ENCODE measurements at regions of chr5 and their contacts with region 1.

Region 1: GRCh38 chr5:139262742-139263445 is 30.6 kb upstream of the MATR3 start:
- DNase-seq: peak; percentile 85 to 89
- ATAC-seq: peak; percentile 95 to 99 (median 99)
- H3K4me3 ChIP-seq: no peak overlapping the region
- H3K27ac ChIP-seq: peak overlapping the region in 7 of 10 donors; percentile 7 to 74 (median 63)
- H3K4me1 ChIP-seq: peaks cover 3 to 23% (median 14%) of the 10 kb centered on the region in 9 donors
- H3K27me3 ChIP-seq: no peaks in the 10 kb centered on the region
- CTCF ChIP-seq: peak; percentile 76 to 97 (median 92)

Region 2: DNA sequence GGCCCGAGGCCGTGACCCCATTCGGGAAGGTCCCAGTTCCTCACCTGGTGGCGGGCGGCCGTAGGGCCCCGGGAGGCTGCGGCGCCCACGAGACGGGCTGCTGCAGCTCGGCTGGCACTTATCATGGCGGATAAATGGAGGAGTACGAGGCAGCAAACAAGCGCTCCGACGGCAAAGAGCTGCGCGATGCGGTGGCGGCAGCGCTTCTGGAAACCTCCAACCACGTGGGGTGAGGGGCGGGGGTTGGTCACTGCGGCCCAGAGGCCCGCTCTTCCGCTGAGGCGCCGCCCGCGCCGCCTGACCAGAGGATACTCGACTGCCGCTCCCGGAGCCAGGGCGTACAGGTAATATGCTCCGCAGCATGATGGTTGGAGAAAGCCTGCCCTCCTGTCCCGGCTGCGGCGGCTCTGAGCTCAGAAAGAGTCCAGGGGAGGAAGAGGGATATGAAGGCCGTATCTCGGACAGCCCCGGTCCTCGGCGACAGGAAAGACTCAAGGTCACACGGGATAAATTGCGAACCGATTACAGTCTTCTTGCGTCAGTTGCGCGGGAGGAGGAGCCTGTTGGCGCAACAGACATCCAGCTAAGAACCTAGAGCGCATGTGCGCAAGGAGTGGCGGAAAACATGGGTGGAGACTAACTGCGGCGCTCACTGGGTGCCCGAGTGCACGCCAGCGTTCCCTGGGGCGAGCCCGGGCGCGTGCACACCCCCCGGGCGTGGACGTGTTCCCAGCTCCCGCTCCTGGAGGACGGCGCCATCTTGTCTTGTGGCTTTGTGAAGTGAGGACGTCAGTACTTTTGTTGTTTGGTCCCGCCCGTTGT is 687.5 kb before region 1 on chr5 and contains the start of gene HSPA9:
- intact Hi-C with region 1: loop called in 7 of 10 experiments (anchors 2 to 10 kb)
- DNase-seq: peak; percentile 96 to 99
- ATAC-seq: peak; percentile 96 to 98 (median 97)
- H3K4me3 ChIP-seq: peak within 1 kb of the TSS; percentile 69 to 98 (median 86)
- H3K27ac ChIP-seq: peak within 1 kb of the TSS; percentile 93 to 99 (median 98)
- H3K4me1 ChIP-seq: peaks cover 0 to 38% (median 20%) of the 10 kb centered on the region in 9 donors
- H3K27me3 ChIP-seq: no peaks in the 10 kb centered on the region
- CTCF ChIP-seq: peak in 2 of 9 donors; percentile 9 to 17
- total RNA-seq, gene HSPA9: 246 to 415 (median 324) TPM

Region 3: GRCh38 chr5:138594305-138595058 is 668.4 kb before region 1 on chr5:
- intact Hi-C with region 1: loop called in 2 of 10 experiments (anchors 5 to 10 kb)
- DNase-seq: no peak
- ATAC-seq: no peak
- H3K4me3 ChIP-seq: no peak overlapping the region
- H3K27ac ChIP-seq: no peak overlapping the region
- H3K4me1 ChIP-seq: no peaks in the 10 kb centered on the region
- H3K27me3 ChIP-seq: no peaks in the 10 kb centered on the region
- CTCF ChIP-seq: peak in 6 of 9 donors; percentile 13 to 43 (median 26)

Region 4: GRCh38 chr5:138752951-138753793 is 509.7 kb before region 1 on chr5 and contains the start of gene CTNNA1:
- intact Hi-C with region 1: loop called in 3 of 10 experiments (anchors 5 to 10 kb)
- DNase-seq: peak; percentile 83 to 88
- ATAC-seq: peak; percentile 80 to 89 (median 82)
- H3K4me3 ChIP-seq: peak within 1 kb of the TSS; percentile 44 to 100 (median 98)
- H3K27ac ChIP-seq: peak within 1 kb of the TSS; percentile 96 to 100 (median 100)
- H3K4me1 ChIP-seq: peaks cover 10 to 47% (median 39%) of the 10 kb centered on the region in 9 donors
- H3K27me3 ChIP-seq: no peaks in the 10 kb centered on the region
- CTCF ChIP-seq: no peak
- total RNA-seq, gene CTNNA1: 337 to 416 (median 382) TPM

Region 5: GRCh38 chr5:138874771-138875551 is 387.9 kb before region 1 on chr5 and contains the start of gene LRRTM2:
- intact Hi-C with region 1: loop called in 1 of 10 experiments (anchors 5 kb)
- DNase-seq: no peak
- ATAC-seq: no peak
- H3K4me3 ChIP-seq: peak within 1 kb of the TSS in 2 of 10 donors; percentile 12
- H3K27ac ChIP-seq: no peak within 1 kb of the TSS
- H3K4me1 ChIP-seq: peaks cover 7 to 82% (median 56%) of the 10 kb centered on the region in 9 donors
- H3K27me3 ChIP-seq: no peaks in the 10 kb centered on the region
- CTCF ChIP-seq: no peak
- total RNA-seq, gene LRRTM2: 0.07 to 0.49 (median 0.17) TPM in 4 of 10 donors, not detected in the others

Region 6: DNA sequence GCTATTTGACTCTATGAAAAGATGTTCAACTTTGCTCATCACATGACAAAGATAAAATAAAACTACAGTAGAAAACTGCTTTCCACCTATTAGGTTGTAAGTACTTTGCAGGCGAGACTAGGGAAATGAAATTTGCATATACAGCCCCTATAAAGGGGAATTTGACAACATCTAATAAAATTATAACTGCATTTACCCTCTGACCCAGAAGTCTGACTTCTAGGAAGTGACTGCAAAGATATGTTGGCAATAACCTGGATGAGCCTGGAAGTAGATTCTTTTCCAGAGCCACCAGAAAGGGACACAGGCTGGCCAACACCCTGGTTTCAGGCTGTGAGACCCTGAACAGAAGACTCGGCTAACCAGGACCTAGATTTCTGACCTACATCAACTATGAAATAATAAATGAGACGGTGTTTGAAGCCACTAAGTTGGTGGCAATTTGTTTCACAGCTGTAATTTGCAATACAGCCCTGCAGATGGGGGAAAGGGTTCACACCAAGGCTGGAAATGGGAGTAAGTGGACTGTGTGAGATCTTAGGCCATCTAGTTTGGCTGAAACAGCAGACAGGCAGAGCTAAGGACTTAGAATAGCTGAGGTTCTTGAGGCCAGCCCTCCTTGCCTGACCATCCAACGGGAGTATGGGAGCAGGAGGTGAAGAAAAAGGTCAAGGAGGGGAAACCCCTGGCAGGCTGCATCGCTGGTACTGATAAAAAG is 171.3 kb before region 1 on chr5:
- intact Hi-C with region 1: loop called (anchors 2 to 10 kb)
- DNase-seq: peak in 1 of 2 donors; percentile 42
- ATAC-seq: peak; percentile 76 to 92 (median 90)
- H3K4me3 ChIP-seq: no peak overlapping the region
- H3K27ac ChIP-seq: peak overlapping the region in 1 of 10 donors; percentile 46
- H3K4me1 ChIP-seq: peaks cover 0 to 19% (median 9%) of the 10 kb centered on the region in 9 donors
- H3K27me3 ChIP-seq: no peaks in the 10 kb centered on the region
- CTCF ChIP-seq: peak in 7 of 9 donors; percentile 33 to 66 (median 54)

Region 7: GRCh38 chr5:139181835-139182452 is 81.0 kb before region 1 on chr5:
- intact Hi-C with region 1: no loop called
- DNase-seq: no peak
- ATAC-seq: no peak
- H3K4me3 ChIP-seq: no peak overlapping the region
- H3K27ac ChIP-seq: peak overlapping the region in 2 of 10 donors; percentile 5 to 26
- H3K4me1 ChIP-seq: peaks cover 7 to 79% (median 61%) of the 10 kb centered on the region in 9 donors
- H3K27me3 ChIP-seq: no peaks in the 10 kb centered on the region
- CTCF ChIP-seq: no peak

Region 8: DNA sequence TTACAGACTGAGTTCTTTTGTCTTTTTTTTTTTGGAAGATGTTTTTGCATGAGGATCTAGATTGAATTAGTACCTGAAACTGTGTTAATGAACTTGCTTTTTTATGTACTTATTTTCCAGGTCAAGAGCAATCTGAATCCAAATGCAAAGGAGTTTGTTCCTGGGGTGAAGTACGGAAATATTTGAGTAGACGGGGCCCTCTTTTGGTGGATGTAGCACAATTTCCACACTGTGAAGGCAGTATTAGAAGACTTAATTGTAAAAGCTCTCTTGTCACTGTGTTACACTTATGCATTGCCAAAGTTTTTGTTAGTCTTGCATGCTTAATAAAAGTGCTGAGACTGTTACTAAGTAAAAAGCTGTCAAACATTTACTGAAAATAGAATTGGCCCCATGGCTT is 105.7 kb after region 1 on chr5:
- intact Hi-C with region 1: no loop called
- DNase-seq: no peak
- ATAC-seq: peak in 2 of 8 donors; percentile 17 to 21
- H3K4me3 ChIP-seq: no peak overlapping the region
- H3K27ac ChIP-seq: peak overlapping the region in 1 of 10 donors; percentile 53
- H3K4me1 ChIP-seq: peaks cover 0 to 30% (median 14%) of the 10 kb centered on the region in 9 donors
- H3K27me3 ChIP-seq: no peaks in the 10 kb centered on the region
- CTCF ChIP-seq: peak in 2 of 9 donors; percentile 10 to 24

Measured in heart right ventricle (tissue), 16 donors.